ENCODE measurements at regions of chr3 and their contacts with region 1.

Region 1: GRCh38 chr3:88180398-88180999 is 30.7 kb downstream of the C3orf38 start:
- DNase-seq: no peak
- H3K4me3 Mint-ChIP-seq: no peak overlapping the region
- H3K27ac Mint-ChIP-seq: no peak overlapping the region
- H3K4me1 Mint-ChIP-seq: no peaks in the 10 kb centered on the region
- H3K27me3 Mint-ChIP-seq: peaks cover 16% of the 10 kb centered on the region

Region 2: GRCh38 chr3:87350364-87351199 is 829.9 kb before region 1 on chr3:
- intact Hi-C with region 1: loop called (anchors 1 kb)
- DNase-seq: no peak
- H3K4me3 Mint-ChIP-seq: no peak overlapping the region
- H3K27ac Mint-ChIP-seq: no peak overlapping the region
- H3K4me1 Mint-ChIP-seq: no peaks in the 10 kb centered on the region
- H3K27me3 Mint-ChIP-seq: peaks cover 9% of the 10 kb centered on the region

Region 3: DNA sequence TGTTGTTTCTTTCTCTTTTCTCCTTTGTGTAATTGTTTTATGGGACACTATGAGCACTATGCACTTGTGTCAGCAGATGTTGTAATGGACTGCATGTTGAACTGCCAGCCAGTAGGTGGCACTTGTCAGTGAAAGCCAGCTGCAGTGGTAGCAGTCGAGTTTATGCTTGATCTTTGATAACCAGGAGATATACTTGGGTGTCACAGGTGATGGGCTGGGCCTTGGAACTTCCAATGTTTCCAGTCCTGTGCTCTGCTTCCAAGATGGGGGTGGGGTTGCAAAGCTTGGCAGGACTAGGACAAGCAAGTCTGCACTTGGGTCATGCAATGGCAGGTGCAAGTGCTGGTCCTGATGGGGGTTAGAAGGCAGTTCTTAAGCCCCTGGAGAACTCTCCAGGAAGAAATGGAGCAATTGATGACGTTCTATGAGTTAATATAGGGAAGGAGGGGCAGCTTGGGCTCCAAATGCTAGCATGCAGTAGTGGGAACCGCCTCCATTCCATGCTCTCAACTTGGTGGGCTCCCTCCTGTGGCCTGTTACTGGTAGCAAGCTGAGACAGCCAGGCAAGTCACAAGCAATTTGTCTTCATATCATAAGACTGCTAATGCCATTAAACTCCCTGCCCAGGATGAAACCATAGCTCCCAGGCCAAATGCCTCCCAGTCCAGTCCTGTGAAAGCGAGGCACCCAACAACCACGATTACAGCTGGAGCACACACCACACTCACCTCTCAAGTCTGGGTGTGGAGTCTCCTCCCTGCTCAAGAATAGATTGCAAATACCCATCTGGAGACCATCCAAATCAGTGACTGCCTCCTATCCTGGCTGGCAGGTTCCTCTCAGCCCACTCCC is 408.9 kb before region 1 on chr3:
- intact Hi-C with region 1: loop called (anchors 1 kb)
- DNase-seq: peak; percentile 17
- H3K4me3 Mint-ChIP-seq: no peak overlapping the region
- H3K27ac Mint-ChIP-seq: no peak overlapping the region
- H3K4me1 Mint-ChIP-seq: no peaks in the 10 kb centered on the region
- H3K27me3 Mint-ChIP-seq: peaks cover 16% of the 10 kb centered on the region

Region 4: DNA sequence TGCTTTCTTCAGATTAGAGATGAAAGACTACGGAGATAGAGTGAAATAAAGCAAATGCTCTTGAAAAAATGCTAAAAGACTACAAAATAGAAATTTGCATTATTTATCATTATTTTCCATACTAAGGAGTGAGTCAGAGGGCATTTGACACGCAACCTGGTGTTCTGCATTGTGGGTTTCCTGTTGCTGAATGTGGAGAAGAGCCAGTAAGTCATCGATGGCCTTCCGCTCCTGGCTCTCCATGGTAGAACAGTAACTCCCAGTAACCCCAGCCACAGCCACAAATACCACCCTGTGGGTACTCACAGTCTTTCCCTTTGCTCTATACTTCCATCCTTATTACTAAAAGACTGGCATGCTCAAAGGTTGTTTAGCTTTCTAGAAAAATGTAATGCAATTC is 183.2 kb before region 1 on chr3:
- intact Hi-C with region 1: no loop called
- DNase-seq: peak; percentile 31
- H3K4me3 Mint-ChIP-seq: peak overlapping the region; percentile 34
- H3K27ac Mint-ChIP-seq: peak overlapping the region; percentile 56
- H3K4me1 Mint-ChIP-seq: peaks cover 30% of the 10 kb centered on the region
- H3K27me3 Mint-ChIP-seq: peaks cover 13% of the 10 kb centered on the region

Region 5: GRCh38 chr3:88019024-88019423 is 161.5 kb before region 1 on chr3:
- intact Hi-C with region 1: loop called (anchors 1 kb)
- DNase-seq: peak; percentile 21
- H3K4me3 Mint-ChIP-seq: no peak overlapping the region
- H3K27ac Mint-ChIP-seq: no peak overlapping the region
- H3K4me1 Mint-ChIP-seq: peaks cover 27% of the 10 kb centered on the region
- H3K27me3 Mint-ChIP-seq: peaks cover 17% of the 10 kb centered on the region

Region 6: DNA sequence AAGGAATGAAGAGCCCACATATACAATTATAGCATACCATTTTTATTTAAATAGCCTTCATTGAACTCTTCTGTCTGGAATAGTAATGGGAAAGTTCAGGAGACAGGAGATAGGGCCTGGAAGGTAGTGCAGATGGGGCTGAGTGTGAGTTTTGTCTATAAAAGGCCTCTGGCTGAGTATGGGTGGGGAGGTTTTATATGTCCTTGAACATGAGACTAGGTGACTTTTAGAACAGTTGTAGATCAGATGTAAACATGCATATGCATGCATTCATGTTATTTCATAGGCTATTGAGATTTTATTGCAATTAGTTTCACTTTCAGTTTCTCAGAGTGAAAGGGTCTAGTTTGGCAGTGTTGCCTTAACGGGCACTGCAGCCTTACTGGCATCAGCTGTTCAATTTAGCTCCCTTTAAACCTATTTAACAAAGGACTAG is 148.8 kb before region 1 on chr3:
- intact Hi-C with region 1: no loop called
- DNase-seq: no peak
- H3K4me3 Mint-ChIP-seq: peak overlapping the region; percentile 86
- H3K27ac Mint-ChIP-seq: peak overlapping the region; percentile 71
- H3K4me1 Mint-ChIP-seq: peaks cover 39% of the 10 kb centered on the region
- H3K27me3 Mint-ChIP-seq: no peaks in the 10 kb centered on the region

Region 7: GRCh38 chr3:88113311-88114162 is 67.0 kb before region 1 on chr3:
- intact Hi-C with region 1: loop called (anchors 2 kb)
- DNase-seq: peak; percentile 44
- H3K4me3 Mint-ChIP-seq: no peak overlapping the region
- H3K27ac Mint-ChIP-seq: no peak overlapping the region
- H3K4me1 Mint-ChIP-seq: peaks cover 17% of the 10 kb centered on the region
- H3K27me3 Mint-ChIP-seq: no peaks in the 10 kb centered on the region

Region 8: DNA sequence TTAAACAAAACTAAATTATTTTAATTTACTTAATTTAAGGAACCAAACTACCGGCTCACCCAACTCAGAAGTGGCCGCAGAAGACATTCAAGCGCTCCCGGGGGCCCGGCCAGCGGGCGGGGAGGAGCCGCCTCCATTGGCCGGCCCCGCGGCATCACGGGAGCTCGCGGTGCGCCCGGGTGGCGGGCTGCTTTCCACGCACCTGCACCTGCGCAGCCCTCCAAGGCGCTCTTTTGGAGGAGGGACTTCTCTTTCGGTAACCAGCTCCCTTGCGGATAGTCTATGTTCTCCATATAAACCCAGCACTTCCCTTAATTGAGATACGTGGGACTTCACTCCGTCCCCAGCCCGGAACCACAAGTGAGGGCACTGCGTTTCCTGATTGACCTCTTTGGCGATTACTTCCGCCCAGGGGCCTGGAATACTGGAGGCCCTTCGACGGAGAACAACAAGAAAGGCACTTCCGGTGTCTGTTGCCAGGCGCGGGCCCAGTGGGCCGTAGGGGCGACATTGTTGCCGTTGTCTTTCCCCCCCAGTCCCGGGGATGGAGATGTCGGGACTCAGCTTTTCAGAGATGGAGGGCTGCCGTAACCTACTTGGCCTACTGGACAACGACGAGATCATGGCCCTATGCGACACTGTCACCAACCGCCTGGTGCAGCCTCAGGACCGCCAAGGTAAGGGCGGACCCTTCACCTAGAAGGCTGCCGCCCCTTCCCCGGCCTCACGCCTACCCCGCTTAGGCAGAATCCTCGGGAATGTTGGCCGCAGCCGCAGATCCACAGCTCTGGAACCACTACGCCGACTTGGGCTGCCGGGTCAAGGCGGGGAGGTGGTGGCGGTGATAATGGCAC is 30.8 kb before region 1 on chr3 and contains the start of gene C3orf38:
- intact Hi-C with region 1: loop called (anchors 1 kb)
- DNase-seq: peak; percentile 80
- H3K4me3 Mint-ChIP-seq: peak within 1 kb of the TSS; percentile 99
- H3K27ac Mint-ChIP-seq: peak within 1 kb of the TSS; percentile 99
- H3K4me1 Mint-ChIP-seq: peaks cover 40% of the 10 kb centered on the region
- H3K27me3 Mint-ChIP-seq: no peaks in the 10 kb centered on the region
- total RNA-seq, gene C3orf38: 21.5 and 23.7 TPM in 2 replicates

Measured in activated T-helper 1 cell treated with anti-CD3 and anti-CD28 coated beads, Interleukin-12 subunit alpha, Interleukin-12 subunit beta, Interleukin-2, Interleukin-4 antibody, amounts not matched to agents 30 ng/mL and 10 ng/mL and 1 ng/mL, durations not matched to agents 14 hours and 24 hours and 36 hours (primary cell).